CD8-positive, alpha-beta T cell (primary cell): ENCODE measurements at regions of chr19 and their contacts with region 1.

Region 1: DNA sequence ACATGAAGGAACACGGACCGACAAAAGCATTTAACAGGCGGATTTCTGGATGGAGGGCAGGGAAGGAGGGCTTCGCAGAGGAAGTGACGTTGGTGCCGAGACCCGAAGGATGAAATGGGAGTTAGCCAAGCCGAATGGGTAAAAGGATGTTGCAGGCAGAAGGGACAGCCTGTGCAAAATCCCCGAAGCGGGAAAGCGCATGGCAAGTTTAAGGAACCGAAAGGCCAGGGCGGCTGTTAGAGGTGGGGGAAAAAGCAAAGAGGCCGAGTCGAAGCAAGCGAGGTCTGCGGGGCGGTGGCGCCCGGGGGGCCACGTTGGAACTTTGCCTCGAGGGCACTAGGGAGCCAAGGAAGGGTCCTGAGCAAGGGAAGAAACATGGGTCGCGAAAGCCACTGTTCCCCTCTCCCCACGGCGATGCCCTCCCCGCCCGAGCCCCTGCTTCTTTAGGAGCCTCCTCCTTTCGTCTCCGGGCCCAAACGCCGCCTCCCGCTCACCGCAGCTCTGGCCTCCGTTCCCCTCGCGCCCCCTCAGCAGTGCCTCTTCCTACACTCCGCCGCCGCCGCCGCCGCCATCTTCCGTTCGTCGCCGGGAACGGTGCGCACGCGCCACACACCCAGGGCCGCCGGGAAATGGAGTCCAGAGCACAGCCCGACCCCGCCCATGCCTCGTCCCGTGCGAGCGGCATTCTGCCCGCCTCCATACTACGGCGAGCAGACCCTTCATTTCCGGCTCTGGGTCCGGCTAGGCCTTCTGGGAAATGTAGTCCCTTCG is at the start of gene SYMPK:
- DNase-seq: peak; percentile 97 to 99 (median 98)
- ATAC-seq: peak; percentile 97
- H3K4me3 ChIP-seq: peak within 1 kb of the TSS; percentile 93 to 99
- H3K4me3 Mint-ChIP-seq: peak within 1 kb of the TSS; percentile 93
- H3K27ac ChIP-seq: peak within 1 kb of the TSS; percentile 82 to 96
- H3K27ac Mint-ChIP-seq: peak within 1 kb of the TSS; percentile 93
- H3K4me1 ChIP-seq: peaks cover 20% of the 10 kb centered on the region
- H3K4me1 Mint-ChIP-seq: peaks cover 32% of the 10 kb centered on the region
- H3K27me3 ChIP-seq: peaks cover 0 to 10% of the 10 kb centered on the region in 2 experiments
- H3K27me3 Mint-ChIP-seq: peaks cover 16% of the 10 kb centered on the region
- CTCF ChIP-seq: no peak
- total RNA-seq, gene SYMPK: 52.6 to 54.2 TPM

Region 2: GRCh38 chr19:45717166-45717982 is 145.4 kb before region 1 on chr19:
- CTCF ChIA-PET with region 1: no interaction called
- POLR2A ChIA-PET with region 1: no interaction called
- intact Hi-C with region 1: loop called (anchors 1 kb)
- DNase-seq: peak; percentile 96 to 99 (median 97)
- ATAC-seq: peak; percentile 95
- H3K4me3 ChIP-seq: peak overlapping the region; percentile 60 to 85
- H3K4me3 Mint-ChIP-seq: peak overlapping the region; percentile 97
- H3K27ac ChIP-seq: peak overlapping the region; percentile 73 to 95
- H3K27ac Mint-ChIP-seq: peak overlapping the region; percentile 97
- H3K4me1 ChIP-seq: peaks cover 21% of the 10 kb centered on the region
- H3K4me1 Mint-ChIP-seq: peaks cover 44% of the 10 kb centered on the region
- H3K27me3 ChIP-seq: no peaks in the 10 kb centered on the region
- H3K27me3 Mint-ChIP-seq: no peaks in the 10 kb centered on the region
- CTCF ChIP-seq: no peak

Region 3: GRCh38 chr19:45770192-45771101 is 92.3 kb before region 1 on chr19:
- CTCF ChIA-PET with region 1: no interaction called
- POLR2A ChIA-PET with region 1: interaction called, 3 read pairs
- intact Hi-C with region 1: loop called (anchors 1 kb)
- DNase-seq: peak; percentile 79 to 94 (median 92)
- ATAC-seq: peak; percentile 74
- H3K4me3 ChIP-seq: peak overlapping the region; percentile 90 to 99
- H3K4me3 Mint-ChIP-seq: peak overlapping the region; percentile 84
- H3K27ac ChIP-seq: peak overlapping the region in 1 of 2 experiments; percentile 77
- H3K27ac Mint-ChIP-seq: peak overlapping the region; percentile 85
- H3K4me1 ChIP-seq: peaks cover 22% of the 10 kb centered on the region
- H3K4me1 Mint-ChIP-seq: peaks cover 24% of the 10 kb centered on the region
- H3K27me3 ChIP-seq: peaks cover 0 to 6% of the 10 kb centered on the region in 2 experiments
- H3K27me3 Mint-ChIP-seq: peaks cover 7% of the 10 kb centered on the region
- CTCF ChIP-seq: peak; percentile 99

Region 4: DNA sequence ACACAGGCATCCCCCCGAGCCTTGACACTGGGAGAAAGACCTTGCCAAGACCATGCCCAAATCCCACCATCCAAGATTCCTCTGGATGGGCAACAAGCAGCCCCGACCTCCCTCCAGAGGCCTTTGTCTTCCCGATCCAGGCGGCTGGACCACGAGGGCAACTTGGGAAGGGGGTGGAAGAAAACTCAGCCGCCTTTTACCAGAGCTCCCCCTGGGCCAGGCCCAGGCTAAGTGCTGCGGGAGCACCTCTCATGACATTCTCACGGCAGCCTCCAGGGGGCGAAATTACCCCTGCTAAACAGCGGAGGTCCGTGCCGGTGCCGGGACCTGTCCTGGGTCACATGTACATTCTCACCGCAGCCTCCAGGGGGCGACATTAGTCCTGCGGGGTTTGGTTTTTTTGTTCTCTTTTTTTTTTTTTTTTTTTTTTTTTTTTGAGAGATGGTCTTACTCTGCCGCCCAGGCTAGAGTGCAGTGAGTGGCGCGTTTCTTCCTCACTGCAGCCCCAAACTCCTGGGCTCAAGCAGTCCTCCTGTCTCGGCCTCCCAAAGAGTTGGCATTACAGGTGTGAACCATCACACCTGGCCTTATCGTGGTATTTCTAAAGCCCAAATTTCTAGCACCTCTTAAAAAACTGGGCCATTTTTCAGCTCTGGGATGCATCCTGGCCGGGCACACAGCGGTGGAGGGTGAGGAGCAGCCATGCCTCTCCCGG is 45.6 kb before region 1 on chr19:
- CTCF ChIA-PET with region 1: interaction called, 7 read pairs
- POLR2A ChIA-PET with region 1: no interaction called
- intact Hi-C with region 1: loop called in 1 of 2 experiments (anchors 1 kb)
- DNase-seq: peak; percentile 93 to 99 (median 95)
- ATAC-seq: peak; percentile 100
- H3K4me3 ChIP-seq: no peak overlapping the region
- H3K4me3 Mint-ChIP-seq: peak overlapping the region; percentile 18
- H3K27ac ChIP-seq: no peak overlapping the region
- H3K27ac Mint-ChIP-seq: no peak overlapping the region
- H3K4me1 ChIP-seq: peaks cover 16% of the 10 kb centered on the region
- H3K4me1 Mint-ChIP-seq: peaks cover 7% of the 10 kb centered on the region
- H3K27me3 ChIP-seq: peaks cover 0 to 5% of the 10 kb centered on the region in 2 experiments
- H3K27me3 Mint-ChIP-seq: peaks cover 8% of the 10 kb centered on the region
- CTCF ChIP-seq: peak; percentile 99

Region 5: GRCh38 chr19:45902651-45903625 is 40.2 kb after region 1 on chr19:
- CTCF ChIA-PET with region 1: interaction called, 4 read pairs
- POLR2A ChIA-PET with region 1: interaction called, 5 read pairs
- intact Hi-C with region 1: loop called (anchors 1 kb)
- DNase-seq: peak; percentile 98 to 100 (median 99)
- ATAC-seq: peak; percentile 82
- H3K4me3 ChIP-seq: peak overlapping the region; percentile 76 to 83
- H3K4me3 Mint-ChIP-seq: peak overlapping the region; percentile 92
- H3K27ac ChIP-seq: peak overlapping the region; percentile 64 to 77
- H3K27ac Mint-ChIP-seq: peak overlapping the region; percentile 72
- H3K4me1 ChIP-seq: peaks cover 17% of the 10 kb centered on the region
- H3K4me1 Mint-ChIP-seq: peaks cover 26% of the 10 kb centered on the region
- H3K27me3 ChIP-seq: no peaks in the 10 kb centered on the region
- H3K27me3 Mint-ChIP-seq: no peaks in the 10 kb centered on the region
- CTCF ChIP-seq: no peak

Region 6: GRCh38 chr19:45994989-45995714 is 132.4 kb after region 1 on chr19 and contains the start of gene CCDC61:
- CTCF ChIA-PET with region 1: no interaction called
- POLR2A ChIA-PET with region 1: no interaction called
- intact Hi-C with region 1: loop called (anchors 1 kb)
- DNase-seq: peak; percentile 92 to 99 (median 95)
- ATAC-seq: peak; percentile 95
- H3K4me3 ChIP-seq: peak within 1 kb of the TSS; percentile 73 to 77
- H3K4me3 Mint-ChIP-seq: no peak within 1 kb of the TSS
- H3K27ac ChIP-seq: peak within 1 kb of the TSS; percentile 64 to 74
- H3K27ac Mint-ChIP-seq: no peak within 1 kb of the TSS
- H3K4me1 ChIP-seq: peaks cover 16% of the 10 kb centered on the region
- H3K4me1 Mint-ChIP-seq: peaks cover 25% of the 10 kb centered on the region
- H3K27me3 ChIP-seq: no peaks in the 10 kb centered on the region
- H3K27me3 Mint-ChIP-seq: peaks cover 7% of the 10 kb centered on the region
- CTCF ChIP-seq: no peak
- total RNA-seq, gene CCDC61: 4.9 to 6.2 TPM

Region 7: GRCh38 chr19:46850228-46851203 is 987.8 kb after region 1 on chr19 and contains the start of gene AP2S1:
- CTCF ChIA-PET with region 1: no interaction called
- POLR2A ChIA-PET with region 1: no interaction called
- intact Hi-C with region 1: loop called in 1 of 2 experiments (anchors 5 kb)
- DNase-seq: peak; percentile 83 to 97 (median 92)
- ATAC-seq: peak; percentile 95
- H3K4me3 ChIP-seq: peak within 1 kb of the TSS; percentile 68 to 88
- H3K4me3 Mint-ChIP-seq: peak within 1 kb of the TSS; percentile 93
- H3K27ac ChIP-seq: peak within 1 kb of the TSS; percentile 44 to 68
- H3K27ac Mint-ChIP-seq: peak within 1 kb of the TSS; percentile 89
- H3K4me1 ChIP-seq: peaks cover 12% of the 10 kb centered on the region
- H3K4me1 Mint-ChIP-seq: peaks cover 31% of the 10 kb centered on the region
- H3K27me3 ChIP-seq: no peaks in the 10 kb centered on the region
- H3K27me3 Mint-ChIP-seq: no peaks in the 10 kb centered on the region
- CTCF ChIP-seq: no peak
- total RNA-seq, gene AP2S1: 21.3 to 26.1 TPM